ENCODE measurements at regions of chr2 and their contacts with region 1.

Region 1: DNA sequence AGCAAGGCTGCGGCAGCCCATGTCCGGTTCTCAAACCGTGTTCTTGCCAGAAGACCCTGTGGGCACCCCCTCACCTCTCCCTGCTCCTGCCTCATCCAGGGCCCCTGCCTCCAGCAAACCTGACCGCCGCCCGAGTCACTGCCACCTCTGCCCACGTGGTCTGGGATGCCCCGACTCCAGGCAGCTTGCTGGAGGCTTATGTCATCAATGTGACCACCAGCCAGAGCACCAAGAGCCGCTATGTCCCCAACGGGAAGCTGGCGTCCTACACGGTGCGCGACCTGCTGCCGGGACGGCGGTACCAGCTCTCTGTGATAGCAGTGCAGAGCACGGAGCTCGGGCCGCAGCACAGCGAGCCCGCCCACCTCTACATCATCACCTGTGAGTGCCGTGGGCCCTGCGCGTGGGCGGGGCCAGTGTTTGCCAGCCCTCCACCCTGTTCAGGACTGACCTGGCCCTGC is 32.2 kb downstream of the MTERF4 start:
- DNase-seq: no peak
- H3K4me3 Mint-ChIP-seq: no peak overlapping the region
- H3K27ac Mint-ChIP-seq: no peak overlapping the region
- H3K4me1 Mint-ChIP-seq: no peaks in the 10 kb centered on the region
- H3K27me3 Mint-ChIP-seq: no peaks in the 10 kb centered on the region

Region 2: GRCh38 chr2:240898108-240898730 is 171.6 kb before region 1 on chr2:
- CTCF ChIA-PET with region 1: no interaction called
- POLR2A ChIA-PET with region 1: no interaction called
- intact Hi-C with region 1: no loop called
- DNase-seq: no peak
- H3K4me3 Mint-ChIP-seq: no peak overlapping the region
- H3K27ac Mint-ChIP-seq: no peak overlapping the region
- H3K4me1 Mint-ChIP-seq: no peaks in the 10 kb centered on the region
- H3K27me3 Mint-ChIP-seq: no peaks in the 10 kb centered on the region

Region 3: DNA sequence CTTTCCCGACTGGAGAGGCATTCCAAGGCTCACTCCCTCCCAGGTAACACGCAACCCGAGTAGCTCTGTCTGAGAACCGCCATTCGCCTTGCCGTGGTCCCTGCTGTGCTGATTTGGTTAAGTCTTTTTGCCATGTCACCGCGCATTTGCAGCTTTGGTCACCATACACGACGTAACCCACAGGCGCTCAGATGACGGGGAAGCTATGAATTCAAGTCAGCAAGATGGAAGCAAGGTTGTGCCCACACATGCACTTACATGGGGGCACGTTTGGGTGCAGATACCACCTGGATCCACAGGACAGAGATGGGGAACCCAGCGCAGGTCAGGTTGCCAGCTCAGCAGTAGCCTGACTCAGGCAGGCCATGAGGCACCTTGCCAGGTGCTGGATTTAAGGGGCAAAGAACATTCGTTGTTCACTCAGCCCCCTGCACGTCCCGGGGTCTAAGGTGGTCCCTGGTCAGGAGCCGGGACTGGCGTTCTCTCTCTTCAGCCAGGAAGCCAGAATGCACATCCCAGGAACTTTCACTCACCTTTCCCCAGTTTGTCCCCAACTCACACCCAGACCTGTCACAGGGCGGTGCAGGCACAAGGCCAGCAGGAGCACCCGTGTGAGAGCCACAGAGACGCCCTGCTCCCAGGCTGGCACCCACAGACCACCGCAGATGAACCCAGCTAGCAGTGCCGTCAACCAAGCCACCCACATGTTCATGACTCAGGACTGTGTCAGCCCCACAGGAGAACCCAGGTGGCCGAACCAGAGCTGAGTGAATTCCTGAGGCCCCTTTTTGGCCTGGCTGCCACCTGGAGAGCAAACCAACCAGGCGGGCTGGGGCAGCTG is 51.6 kb before region 1 on chr2:
- CTCF ChIA-PET with region 1: no interaction called
- POLR2A ChIA-PET with region 1: no interaction called
- intact Hi-C with region 1: no loop called
- DNase-seq: no peak
- H3K4me3 Mint-ChIP-seq: no peak overlapping the region
- H3K27ac Mint-ChIP-seq: no peak overlapping the region
- H3K4me1 Mint-ChIP-seq: no peaks in the 10 kb centered on the region
- H3K27me3 Mint-ChIP-seq: no peaks in the 10 kb centered on the region

Region 4: DNA sequence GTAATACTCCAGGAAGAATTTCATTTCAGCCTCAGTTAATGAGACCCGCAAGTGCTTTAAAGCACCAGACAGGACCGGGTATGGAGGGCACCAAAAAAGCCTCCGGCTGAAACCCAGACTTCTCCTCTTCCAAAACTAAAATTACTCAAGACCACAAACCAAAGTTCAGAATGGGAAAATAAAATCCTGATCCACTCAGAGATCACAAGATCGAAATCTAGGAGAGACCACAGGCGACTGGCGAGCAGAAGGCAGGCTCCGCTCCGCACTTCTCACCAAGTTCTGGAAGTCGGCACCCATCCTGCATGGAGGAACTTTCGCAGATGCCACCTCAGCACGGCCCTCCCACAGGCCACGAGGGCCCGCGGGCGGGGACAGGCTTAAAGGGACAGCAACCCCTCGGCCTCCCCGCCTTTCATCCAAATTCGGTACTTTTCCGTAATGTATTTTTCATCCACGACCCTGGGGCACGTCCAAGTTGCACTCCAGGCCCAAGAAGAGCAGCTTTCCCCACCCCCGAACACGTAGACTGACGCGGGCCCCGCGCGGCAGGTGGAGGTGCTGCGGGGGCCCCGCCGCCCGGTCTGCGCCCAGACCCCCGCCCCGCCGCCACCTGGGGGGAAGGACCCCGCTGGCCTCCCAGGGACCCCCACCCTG is 201.9 kb after region 1 on chr2:
- CTCF ChIA-PET with region 1: no interaction called
- POLR2A ChIA-PET with region 1: no interaction called
- intact Hi-C with region 1: loop called (anchors 10 kb)
- DNase-seq: peak; percentile 70
- H3K4me3 Mint-ChIP-seq: peak overlapping the region; percentile 84
- H3K27ac Mint-ChIP-seq: peak overlapping the region; percentile 76
- H3K4me1 Mint-ChIP-seq: peaks cover 47% of the 10 kb centered on the region
- H3K27me3 Mint-ChIP-seq: no peaks in the 10 kb centered on the region

Measured in activated CD4-positive, alpha-beta memory T cell treated with anti-CD3 and anti-CD28 coated beads for 36 hours (primary cell).